B cell (primary cell): ENCODE measurements at regions of chr17 and their contacts with region 1.

Region 1: GRCh38 chr17:79796763-79797491 is at the start of gene CBX8:
- DNase-seq: peak; percentile 99
- ATAC-seq: peak; percentile 90
- H3K4me3 ChIP-seq: peak within 1 kb of the TSS; percentile 65 to 90 (median 71)
- H3K4me3 Mint-ChIP-seq: peak within 1 kb of the TSS; percentile 91
- H3K27ac ChIP-seq: peak within 1 kb of the TSS; percentile 50 to 68
- H3K27ac Mint-ChIP-seq: peak within 1 kb of the TSS; percentile 95
- H3K4me1 ChIP-seq: peaks cover 46 to 50% of the 10 kb centered on the region in 2 donors
- H3K4me1 Mint-ChIP-seq: peaks cover 41% of the 10 kb centered on the region
- H3K27me3 ChIP-seq: peaks cover 0 to 61% (median 46%) of the 10 kb centered on the region in 4 experiments
- H3K27me3 Mint-ChIP-seq: peaks cover 39% of the 10 kb centered on the region
- CTCF ChIP-seq: no peak
- total RNA-seq, gene CBX8: 6.8 and 10.3 TPM in 2 replicates

Region 2: DNA sequence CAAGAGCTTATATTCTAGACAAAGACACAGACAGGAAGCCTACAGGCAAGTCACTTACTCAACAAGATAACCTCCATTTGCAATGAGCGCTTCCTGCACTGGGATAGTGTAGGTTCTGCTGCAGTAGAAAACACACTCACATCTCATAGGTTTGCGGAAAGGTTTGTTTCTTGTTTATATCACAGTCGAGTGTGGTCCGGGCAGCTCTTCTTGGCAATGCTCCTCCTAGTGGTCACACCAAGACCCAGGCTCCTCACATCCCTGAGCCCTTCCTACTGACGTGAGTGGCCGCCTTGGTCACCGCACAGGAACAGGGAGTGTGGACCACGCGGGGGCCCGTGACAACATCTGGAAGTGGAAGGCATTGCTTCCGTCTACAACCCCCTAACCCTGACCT is 138.1 kb before region 1 on chr17:
- CTCF ChIA-PET with region 1: no interaction called
- POLR2A ChIA-PET with region 1: no interaction called
- intact Hi-C with region 1: no loop called
- DNase-seq: no peak
- ATAC-seq: no peak
- H3K4me3 ChIP-seq: no peak overlapping the region
- H3K4me3 Mint-ChIP-seq: no peak overlapping the region
- H3K27ac ChIP-seq: no peak overlapping the region
- H3K27ac Mint-ChIP-seq: no peak overlapping the region
- H3K4me1 ChIP-seq: no peaks in the 10 kb centered on the region
- H3K4me1 Mint-ChIP-seq: no peaks in the 10 kb centered on the region
- H3K27me3 ChIP-seq: peaks cover 0 to 28% (median 5%) of the 10 kb centered on the region in 4 experiments
- H3K27me3 Mint-ChIP-seq: peaks cover 61% of the 10 kb centered on the region
- CTCF ChIP-seq: no peak

Region 3: GRCh38 chr17:79777894-79778503 is 18.9 kb before region 1 on chr17 and contains the start of gene CBX2:
- CTCF ChIA-PET with region 1: no interaction called
- POLR2A ChIA-PET with region 1: interaction called, 5 read pairs
- intact Hi-C with region 1: loop called (anchors 2 kb)
- DNase-seq: peak; percentile 87
- ATAC-seq: peak; percentile 90
- H3K4me3 ChIP-seq: peak within 1 kb of the TSS; percentile 7 to 66 (median 51)
- H3K4me3 Mint-ChIP-seq: peak within 1 kb of the TSS; percentile 88
- H3K27ac ChIP-seq: no peak within 1 kb of the TSS
- H3K27ac Mint-ChIP-seq: peak within 1 kb of the TSS; percentile 69
- H3K4me1 ChIP-seq: peaks cover 27 to 40% of the 10 kb centered on the region in 2 donors
- H3K4me1 Mint-ChIP-seq: peaks cover 24% of the 10 kb centered on the region
- H3K27me3 ChIP-seq: peaks cover 0 to 84% (median 50%) of the 10 kb centered on the region in 4 experiments
- H3K27me3 Mint-ChIP-seq: peaks cover 74% of the 10 kb centered on the region
- CTCF ChIP-seq: no peak
- total RNA-seq, gene CBX2: 0.07 and 0.47 TPM in 2 replicates

Region 4: DNA sequence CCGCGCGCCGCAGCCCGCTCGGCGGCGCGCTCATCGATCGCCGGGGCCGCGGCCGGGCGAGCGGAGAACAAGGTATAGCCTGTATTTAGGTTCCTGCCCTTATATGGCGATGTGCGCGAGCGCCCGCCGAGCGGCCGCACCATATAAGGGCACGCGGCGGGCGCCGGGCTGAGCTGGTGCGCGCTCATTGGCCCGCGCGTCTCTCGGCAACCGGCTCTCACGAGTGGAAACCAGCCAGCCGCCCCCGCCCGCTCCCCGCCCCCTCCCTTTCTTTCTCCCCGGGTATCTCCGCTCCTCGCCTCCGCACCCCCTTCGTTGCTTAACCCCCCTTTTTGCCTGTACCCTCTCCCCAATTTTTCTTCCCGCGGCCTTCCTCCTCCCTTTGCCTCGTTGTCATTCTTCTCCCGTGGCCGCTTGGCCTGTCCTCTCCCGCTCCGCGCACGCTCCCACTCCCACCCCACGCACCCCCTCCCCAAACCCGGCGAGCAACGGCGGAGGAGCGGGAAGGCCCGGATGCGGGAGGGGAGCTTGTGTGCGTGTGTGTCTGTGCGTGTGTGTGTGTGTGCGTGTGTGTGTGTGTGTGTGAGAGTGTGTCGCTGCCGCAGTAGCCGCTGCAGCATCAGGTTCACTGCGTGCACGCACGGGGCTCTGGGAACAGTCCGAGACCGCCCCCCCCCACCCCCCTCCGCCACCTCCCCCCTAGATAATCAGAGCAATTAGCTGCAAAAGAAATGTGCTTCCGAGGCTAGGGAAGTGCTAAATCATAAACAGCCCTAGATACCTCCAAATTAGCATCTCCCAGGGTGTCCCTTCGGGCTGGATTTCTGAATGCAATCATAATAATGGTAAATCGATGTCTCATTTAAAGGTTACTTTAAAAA is 13.4 kb after region 1 on chr17:
- CTCF ChIA-PET with region 1: interaction called, 11 read pairs
- POLR2A ChIA-PET with region 1: interaction called, 9 read pairs
- intact Hi-C with region 1: loop called (anchors 1 kb)
- DNase-seq: peak; percentile 63
- ATAC-seq: peak; percentile 74
- H3K4me3 ChIP-seq: no peak overlapping the region
- H3K4me3 Mint-ChIP-seq: peak overlapping the region; percentile 33
- H3K27ac ChIP-seq: no peak overlapping the region
- H3K27ac Mint-ChIP-seq: peak overlapping the region; percentile 46
- H3K4me1 ChIP-seq: peaks cover 44 to 73% of the 10 kb centered on the region in 2 donors
- H3K4me1 Mint-ChIP-seq: peaks cover 29% of the 10 kb centered on the region
- H3K27me3 ChIP-seq: peaks cover 0 to 91% (median 75%) of the 10 kb centered on the region in 4 experiments
- H3K27me3 Mint-ChIP-seq: peaks cover 52% of the 10 kb centered on the region
- CTCF ChIP-seq: no peak

Region 5: DNA sequence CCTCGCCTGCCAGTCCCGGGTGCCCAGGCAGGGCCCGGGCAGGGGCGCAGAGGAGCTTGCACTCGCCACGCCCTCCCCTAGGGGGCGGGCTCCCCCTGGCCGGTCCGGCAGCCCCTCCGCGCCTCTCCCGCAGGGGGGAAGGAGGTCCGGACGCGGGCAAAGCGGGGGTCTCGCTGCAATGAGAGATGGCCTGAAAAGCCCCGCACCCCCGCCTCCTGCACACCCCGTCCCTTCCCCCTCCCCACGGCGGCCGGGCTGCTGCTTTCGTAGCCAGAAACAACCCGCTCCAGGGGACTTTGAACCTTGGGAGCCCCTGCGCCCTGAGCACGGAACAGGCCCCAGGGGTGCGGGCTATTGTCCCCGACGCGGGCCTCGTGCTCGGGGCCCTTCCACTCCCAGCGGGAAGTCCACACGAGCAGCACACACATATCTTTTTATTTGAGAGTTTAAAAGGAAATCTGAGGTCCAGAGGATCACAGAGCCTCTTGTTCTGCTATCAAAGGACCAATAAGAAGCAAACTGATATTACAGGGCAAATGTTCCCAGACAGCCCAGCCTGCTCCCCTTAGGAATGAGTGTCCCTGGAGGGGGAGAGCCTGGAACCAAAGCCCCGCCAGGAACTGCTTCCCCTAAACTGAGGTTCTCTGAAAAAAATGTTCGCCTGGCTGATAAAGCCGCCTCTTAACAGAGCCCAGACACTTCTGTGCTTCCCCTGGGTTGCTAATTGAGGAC is 48.1 kb after region 1 on chr17:
- CTCF ChIA-PET with region 1: interaction called, 18 read pairs
- POLR2A ChIA-PET with region 1: interaction called, 45 read pairs
- intact Hi-C with region 1: no loop called
- DNase-seq: peak; percentile 75
- ATAC-seq: peak; percentile 74
- H3K4me3 ChIP-seq: peak overlapping the region in 1 of 5 experiments; percentile 8
- H3K4me3 Mint-ChIP-seq: peak overlapping the region; percentile 52
- H3K27ac ChIP-seq: no peak overlapping the region
- H3K27ac Mint-ChIP-seq: no peak overlapping the region
- H3K4me1 ChIP-seq: peaks cover 53 to 56% of the 10 kb centered on the region in 2 donors
- H3K4me1 Mint-ChIP-seq: peaks cover 35% of the 10 kb centered on the region
- H3K27me3 ChIP-seq: peaks cover 0 to 83% (median 43%) of the 10 kb centered on the region in 4 experiments
- H3K27me3 Mint-ChIP-seq: peaks cover 37% of the 10 kb centered on the region
- CTCF ChIP-seq: peak; percentile 90

Region 6: GRCh38 chr17:79997011-79997660 is 200.2 kb after region 1 on chr17:
- CTCF ChIA-PET with region 1: no interaction called
- POLR2A ChIA-PET with region 1: no interaction called
- intact Hi-C with region 1: loop called (anchors 2 kb)
- DNase-seq: peak; percentile 90
- ATAC-seq: peak; percentile 98
- H3K4me3 ChIP-seq: peak overlapping the region; percentile 1 to 45 (median 19)
- H3K4me3 Mint-ChIP-seq: peak overlapping the region; percentile 80
- H3K27ac ChIP-seq: peak overlapping the region; percentile 71 to 81
- H3K27ac Mint-ChIP-seq: peak overlapping the region; percentile 95
- H3K4me1 ChIP-seq: peaks cover 32 to 40% of the 10 kb centered on the region in 2 donors
- H3K4me1 Mint-ChIP-seq: peaks cover 41% of the 10 kb centered on the region
- H3K27me3 ChIP-seq: peaks cover 0 to 11% (median 0%) of the 10 kb centered on the region in 4 experiments
- H3K27me3 Mint-ChIP-seq: peaks cover 5% of the 10 kb centered on the region
- CTCF ChIP-seq: no peak

Region 7: DNA sequence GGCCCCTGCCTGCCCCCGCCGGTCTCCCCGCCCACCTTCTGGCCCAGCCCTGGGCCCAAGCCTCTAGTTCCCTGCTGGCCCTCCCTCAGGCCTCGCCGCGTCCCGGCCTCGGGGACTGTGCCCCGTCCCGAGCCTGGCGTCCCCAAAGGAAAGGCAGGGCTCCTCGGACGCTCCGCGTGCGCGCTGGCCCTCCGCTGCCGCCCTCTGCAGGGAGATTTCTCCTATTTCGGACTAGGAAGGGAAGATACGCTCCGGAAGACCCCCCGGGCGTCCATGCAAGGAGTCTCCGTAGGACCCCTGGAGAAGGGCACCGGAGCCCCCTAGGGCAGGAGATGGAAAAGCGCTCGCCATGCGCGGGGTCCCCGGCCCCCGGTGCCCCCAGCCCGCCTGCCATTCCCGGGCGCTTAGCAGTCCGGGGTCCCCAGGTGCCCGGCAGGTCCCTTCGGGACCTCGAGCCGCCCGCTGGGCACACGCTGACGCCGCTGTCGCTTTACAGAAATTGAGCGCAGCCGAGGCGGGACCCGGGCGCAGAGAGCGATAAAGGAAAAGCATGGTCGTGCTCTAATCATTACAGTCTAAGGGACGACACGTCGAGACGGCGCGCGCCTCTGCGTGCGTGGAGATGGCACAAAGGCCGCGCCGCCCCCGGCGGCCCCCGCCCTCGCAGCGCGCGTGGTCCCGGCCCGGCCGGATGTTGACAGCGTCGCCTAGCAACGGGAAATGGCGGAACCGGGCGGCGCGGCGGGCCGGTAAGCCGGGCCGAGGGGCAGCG is 239.2 kb after region 1 on chr17 and contains the start of gene CCDC40:
- CTCF ChIA-PET with region 1: no interaction called
- POLR2A ChIA-PET with region 1: no interaction called
- intact Hi-C with region 1: loop called (anchors 2 kb)
- DNase-seq: peak; percentile 93
- ATAC-seq: peak; percentile 87
- H3K4me3 ChIP-seq: peak within 1 kb of the TSS; percentile 43 to 80 (median 71)
- H3K4me3 Mint-ChIP-seq: peak within 1 kb of the TSS; percentile 87
- H3K27ac ChIP-seq: peak within 1 kb of the TSS; percentile 73 to 83
- H3K27ac Mint-ChIP-seq: peak within 1 kb of the TSS; percentile 89
- H3K4me1 ChIP-seq: peaks cover 15 to 22% of the 10 kb centered on the region in 2 donors
- H3K4me1 Mint-ChIP-seq: peaks cover 11% of the 10 kb centered on the region
- H3K27me3 ChIP-seq: peaks cover 0 to 14% (median 1%) of the 10 kb centered on the region in 4 experiments
- H3K27me3 Mint-ChIP-seq: peaks cover 10% of the 10 kb centered on the region
- CTCF ChIP-seq: no peak
- total RNA-seq, gene CCDC40: 1.9 and 3.2 TPM in 2 replicates

Region 8: DNA sequence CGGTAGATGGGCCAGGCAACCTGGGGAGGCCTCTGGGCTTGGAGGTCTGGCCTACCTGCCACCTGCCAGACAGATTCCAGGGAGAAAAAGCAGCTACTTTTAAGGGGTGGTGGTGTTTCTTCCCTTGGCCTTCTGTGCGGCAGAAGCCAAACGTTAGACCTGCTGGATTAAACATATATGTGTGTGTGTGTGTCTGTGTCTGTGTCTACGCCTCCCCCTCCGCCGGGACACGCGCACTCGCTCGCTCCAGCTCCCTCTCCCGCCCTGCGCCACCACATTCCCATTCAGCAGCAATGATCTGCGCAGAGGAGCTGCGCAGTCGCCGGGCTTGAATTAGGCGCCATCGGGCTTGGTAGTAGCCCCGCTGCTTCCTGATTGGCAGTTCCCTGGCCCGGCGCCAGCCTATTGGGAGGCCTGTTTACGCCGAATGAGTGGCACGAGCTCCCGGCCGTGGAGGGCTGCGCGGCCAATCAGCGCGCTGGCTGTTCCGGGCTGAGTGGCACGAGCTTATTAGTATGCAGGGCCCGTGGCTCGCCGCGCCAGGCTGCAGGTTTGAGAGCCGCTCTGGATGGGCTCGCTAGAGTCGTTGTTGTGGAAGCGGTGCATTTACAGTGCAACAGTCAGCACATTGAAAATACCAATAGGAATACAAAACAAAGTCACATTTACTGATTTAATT is 1598.1 kb after region 1 on chr17 and contains the start of gene BAHCC1:
- CTCF ChIA-PET with region 1: no interaction called
- POLR2A ChIA-PET with region 1: no interaction called
- intact Hi-C with region 1: loop called (anchors 5 kb)
- DNase-seq: peak; percentile 85
- ATAC-seq: peak; percentile 79
- H3K4me3 ChIP-seq: peak within 1 kb of the TSS in 4 of 5 experiments; percentile 17 to 57 (median 36)
- H3K4me3 Mint-ChIP-seq: peak within 1 kb of the TSS; percentile 76
- H3K27ac ChIP-seq: no peak within 1 kb of the TSS
- H3K27ac Mint-ChIP-seq: peak within 1 kb of the TSS; percentile 78
- H3K4me1 ChIP-seq: peaks cover 58 to 66% of the 10 kb centered on the region in 2 donors
- H3K4me1 Mint-ChIP-seq: peaks cover 29% of the 10 kb centered on the region
- H3K27me3 ChIP-seq: peaks cover 0 to 84% (median 55%) of the 10 kb centered on the region in 4 experiments
- H3K27me3 Mint-ChIP-seq: peaks cover 44% of the 10 kb centered on the region
- CTCF ChIP-seq: no peak
- total RNA-seq, gene BAHCC1: 0.12 and 0.44 TPM in 2 replicates